HCT116 (cell line): ENCODE measurements at regions of chr1 and their contacts with region 1.

Region 1: GRCh38 chr1:182446033-182446669 is 3.8 kb upstream of the RGSL1 start:
- DNase-seq: peak; percentile 47
- ATAC-seq: peak; percentile 91
- H3K4me3 ChIP-seq: no peak overlapping the region
- H3K27ac ChIP-seq: no peak overlapping the region
- H3K4me1 ChIP-seq: no peaks in the 10 kb centered on the region
- H3K27me3 ChIP-seq: no peaks in the 10 kb centered on the region
- CTCF ChIP-seq: peak; percentile 53 to 75 (median 72)
- POLR2A ChIP-seq: no peak
- RAD21 ChIP-seq: peak; percentile 86

Region 2: DNA sequence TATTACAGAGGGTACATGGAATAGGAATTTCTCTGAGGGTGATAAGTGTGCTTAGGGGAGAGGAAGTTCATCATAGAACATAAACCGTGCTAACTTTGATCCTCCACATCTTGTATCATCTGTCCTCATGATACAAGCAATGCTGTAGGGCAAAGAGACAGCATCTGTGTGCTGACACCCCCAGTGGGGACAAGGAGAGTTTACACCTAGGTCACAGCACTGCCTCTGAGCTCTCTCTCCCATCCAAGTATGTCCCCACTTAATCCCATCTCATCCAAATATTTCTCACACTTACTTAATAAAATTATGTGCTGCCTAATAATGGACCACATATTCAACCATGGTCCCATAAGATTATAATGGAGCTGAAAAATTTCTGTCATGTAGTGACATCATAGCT is 41.4 kb before region 1 on chr1:
- CTCF ChIA-PET with region 1: no interaction called
- POLR2A ChIA-PET with region 1: no interaction called
- RAD21 ChIA-PET with region 1: no interaction called
- intact Hi-C with region 1: no loop called
- DNase-seq: no peak
- ATAC-seq: peak; percentile 88
- H3K4me3 ChIP-seq: no peak overlapping the region
- H3K27ac ChIP-seq: no peak overlapping the region
- H3K4me1 ChIP-seq: no peaks in the 10 kb centered on the region
- H3K27me3 ChIP-seq: no peaks in the 10 kb centered on the region
- CTCF ChIP-seq: peak in 2 of 3 experiments; percentile 30 to 33; a peak in 3 of 6 replicates
- POLR2A ChIP-seq: no peak
- RAD21 ChIP-seq: no peak

Region 3: DNA sequence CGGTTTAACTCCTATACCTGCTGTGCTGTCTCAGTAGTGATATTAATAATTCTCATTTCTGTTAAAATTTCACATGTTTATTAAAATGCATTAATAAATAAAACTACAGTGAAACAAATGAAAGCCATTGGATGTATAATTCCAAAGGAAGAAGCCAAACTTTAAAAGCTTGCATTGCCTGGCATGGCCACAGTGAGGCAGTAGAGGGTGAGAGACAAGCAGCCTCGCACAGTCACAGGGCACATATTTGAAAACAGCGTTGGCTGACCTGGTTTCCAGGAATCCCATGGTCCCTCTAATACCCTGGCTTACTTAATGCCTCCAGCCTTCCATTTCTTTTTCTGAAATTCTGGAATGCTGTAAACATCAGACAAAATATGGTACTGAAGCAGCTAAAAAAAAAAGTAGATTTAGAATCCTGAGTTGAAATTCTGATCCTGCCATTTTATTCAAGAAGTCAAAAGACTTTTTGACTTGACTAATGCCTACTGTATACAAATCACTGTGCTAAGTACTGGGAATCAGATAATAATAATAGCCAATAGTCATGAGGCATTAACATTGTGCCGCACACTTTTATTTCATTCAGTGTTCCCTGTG is 149.6 kb after region 1 on chr1:
- CTCF ChIA-PET with region 1: interaction called, 3 read pairs
- POLR2A ChIA-PET with region 1: no interaction called
- RAD21 ChIA-PET with region 1: no interaction called
- intact Hi-C with region 1: loop called (anchors 2 kb)
- DNase-seq: peak; percentile 43
- ATAC-seq: peak; percentile 86
- H3K4me3 ChIP-seq: no peak overlapping the region
- H3K27ac ChIP-seq: no peak overlapping the region
- H3K4me1 ChIP-seq: no peaks in the 10 kb centered on the region
- H3K27me3 ChIP-seq: no peaks in the 10 kb centered on the region
- CTCF ChIP-seq: peak; percentile 78 to 93 (median 92)
- POLR2A ChIP-seq: no peak
- RAD21 ChIP-seq: peak; percentile 80

Region 4: GRCh38 chr1:182789138-182790076 is 343.3 kb after region 1 on chr1 and contains the start of gene NPL:
- CTCF ChIA-PET with region 1: interaction called, 7 read pairs
- POLR2A ChIA-PET with region 1: no interaction called
- RAD21 ChIA-PET with region 1: no interaction called
- intact Hi-C with region 1: loop called (anchors 1 kb)
- DNase-seq: no peak
- ATAC-seq: peak; percentile 54
- H3K4me3 ChIP-seq: no peak within 1 kb of the TSS
- H3K27ac ChIP-seq: no peak within 1 kb of the TSS
- H3K4me1 ChIP-seq: no peaks in the 10 kb centered on the region
- H3K27me3 ChIP-seq: peaks cover 10% of the 10 kb centered on the region
- CTCF ChIP-seq: no peak
- POLR2A ChIP-seq: no peak
- RAD21 ChIP-seq: no peak
- total RNA-seq, gene NPL: 0.39 TPM

Region 5: DNA sequence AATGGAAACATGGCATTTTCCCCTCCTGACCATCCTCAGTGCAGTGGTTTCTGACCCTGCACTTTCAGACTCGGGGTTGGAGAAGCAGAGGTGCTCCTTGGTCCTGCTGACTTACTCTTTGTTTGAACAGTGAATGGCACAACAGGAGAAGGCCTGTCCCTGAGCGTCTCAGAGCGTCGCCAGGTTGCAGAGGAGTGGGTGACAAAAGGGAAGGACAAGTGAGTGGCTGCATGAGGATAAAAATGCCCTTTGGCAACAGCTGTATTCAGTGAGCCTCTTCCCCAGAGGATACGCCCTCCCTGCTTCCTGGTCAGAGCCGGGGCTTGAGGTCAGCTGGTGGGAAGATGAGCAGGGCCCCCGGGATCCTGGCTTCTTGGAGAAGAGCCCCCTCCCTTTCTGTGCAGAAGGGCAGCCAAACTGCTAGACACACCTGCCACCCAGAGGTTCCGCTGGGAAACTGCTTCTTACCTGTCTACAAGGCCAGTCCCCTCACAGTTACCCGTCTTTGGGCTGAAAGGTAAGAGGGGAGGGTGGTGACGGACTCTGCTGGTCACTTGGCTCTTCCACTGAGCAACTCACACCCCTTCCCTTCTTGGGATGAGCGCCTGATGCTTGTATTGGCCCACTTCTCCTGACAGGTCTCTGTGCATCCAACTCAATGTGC is 360.0 kb after region 1 on chr1:
- CTCF ChIA-PET with region 1: no interaction called
- POLR2A ChIA-PET with region 1: no interaction called
- RAD21 ChIA-PET with region 1: no interaction called
- intact Hi-C with region 1: loop called (anchors 5 kb)
- DNase-seq: peak; percentile 18
- ATAC-seq: peak; percentile 93
- H3K4me3 ChIP-seq: no peak overlapping the region
- H3K27ac ChIP-seq: no peak overlapping the region
- H3K4me1 ChIP-seq: peaks cover 0 to 4% of the 10 kb centered on the region in 2 experiments; a peak in 1 of 4 replicates
- H3K27me3 ChIP-seq: no peaks in the 10 kb centered on the region
- CTCF ChIP-seq: peak; percentile 44 to 54 (median 45); a peak in 5 of 6 replicates
- POLR2A ChIP-seq: no peak
- RAD21 ChIP-seq: peak; percentile 69